Dorsolateral prefrontal cortex (tissue), 120 donors: ENCODE measurements at regions of chr3 and their contacts with region 1.

Region 1: DNA sequence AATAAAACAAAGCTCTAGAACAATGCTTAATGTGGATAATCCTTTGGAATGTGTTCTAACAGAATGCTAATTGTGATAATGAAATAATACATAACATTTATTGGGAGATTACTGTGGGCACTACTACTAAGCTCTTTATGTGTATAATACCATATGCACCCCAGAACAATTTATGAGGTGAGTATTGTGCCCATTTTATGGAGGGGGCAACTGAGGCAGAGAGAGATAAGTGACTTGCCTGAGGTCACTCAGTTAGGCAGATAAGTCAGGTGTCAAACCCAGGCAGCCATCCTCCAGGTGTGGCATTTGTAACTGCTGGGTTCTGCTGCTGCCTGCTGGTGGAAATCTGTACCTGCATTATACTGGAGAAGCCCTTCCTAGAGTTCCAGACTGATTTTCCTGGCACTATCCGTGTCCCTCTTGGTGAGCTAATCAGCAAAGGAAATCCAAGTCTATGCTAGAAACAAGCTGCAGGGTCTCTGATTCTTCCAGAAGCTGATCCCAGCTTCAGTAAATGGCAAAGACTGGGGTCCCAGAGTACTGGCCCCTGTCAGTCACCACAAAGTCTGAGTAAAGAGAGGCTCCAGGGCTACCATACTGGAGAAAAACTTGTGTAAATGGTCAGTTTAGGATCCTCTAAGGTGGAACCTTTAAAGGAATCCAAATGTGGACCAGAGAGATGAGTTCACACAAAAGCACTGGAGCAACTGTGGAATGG is 22.6 kb upstream of the RBP1 start:
- DNase-seq: peak in 1 of 10 donors; percentile 33
- H3K4me3 ChIP-seq: no peak overlapping the region
- H3K27ac ChIP-seq: peak overlapping the region in 36 of 59 donors; percentile 5 to 75 (median 45)
- H3K27me3 ChIP-seq: no peaks in the 10 kb centered on the region
- CTCF ChIP-seq: peak; percentile 24 to 80 (median 65)

Region 2: DNA sequence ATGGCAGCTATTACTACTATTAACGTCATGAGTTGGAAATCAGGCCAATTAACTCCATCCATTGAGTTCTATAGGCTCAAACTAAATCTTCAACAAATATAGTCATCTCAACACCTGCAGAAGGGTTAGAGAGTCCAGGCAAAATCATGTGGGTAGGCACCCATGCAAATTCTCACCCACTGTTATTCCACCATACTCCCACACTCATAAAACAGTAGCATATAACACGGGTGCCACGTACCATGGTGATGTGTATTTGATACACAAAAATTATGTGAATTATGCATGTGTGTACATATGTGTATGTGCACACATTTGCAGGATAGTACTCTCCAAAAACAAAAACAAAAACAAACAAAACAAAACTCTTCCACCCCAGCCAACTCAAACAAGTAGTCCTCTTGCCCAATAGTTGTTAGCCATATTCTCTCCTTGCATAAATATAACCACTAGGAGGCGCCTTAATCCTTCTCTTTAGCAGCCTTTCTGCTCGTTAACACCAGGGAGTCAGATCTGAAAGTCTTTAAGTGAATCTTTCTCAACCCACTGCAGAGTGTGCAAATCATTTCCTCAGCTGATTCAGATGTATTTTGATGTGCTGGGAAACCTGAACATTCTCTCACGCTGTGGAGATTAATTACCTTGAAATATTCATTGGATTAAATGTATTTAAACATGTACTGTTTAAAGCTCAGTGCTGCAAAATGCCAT is 134.7 kb before region 1 on chr3:
- intact Hi-C with region 1: loop called (anchors 1 to 5 kb)
- DNase-seq: no peak
- H3K4me3 ChIP-seq: no peak overlapping the region
- H3K27ac ChIP-seq: no peak overlapping the region
- H3K27me3 ChIP-seq: no peaks in the 10 kb centered on the region
- CTCF ChIP-seq: peak; percentile 59 to 96 (median 89)

Region 3: GRCh38 chr3:139506766-139507165 is 55.4 kb before region 1 on chr3:
- intact Hi-C with region 1: loop called in 1 of 2 experiments (anchors 5 kb)
- DNase-seq: peak in 3 of 10 donors; percentile 12 to 49 (median 39)
- H3K4me3 ChIP-seq: no peak overlapping the region
- H3K27ac ChIP-seq: no peak overlapping the region
- H3K27me3 ChIP-seq: no peaks in the 10 kb centered on the region
- CTCF ChIP-seq: peak in 50 of 56 donors; percentile 24 to 69 (median 42)

Region 4: DNA sequence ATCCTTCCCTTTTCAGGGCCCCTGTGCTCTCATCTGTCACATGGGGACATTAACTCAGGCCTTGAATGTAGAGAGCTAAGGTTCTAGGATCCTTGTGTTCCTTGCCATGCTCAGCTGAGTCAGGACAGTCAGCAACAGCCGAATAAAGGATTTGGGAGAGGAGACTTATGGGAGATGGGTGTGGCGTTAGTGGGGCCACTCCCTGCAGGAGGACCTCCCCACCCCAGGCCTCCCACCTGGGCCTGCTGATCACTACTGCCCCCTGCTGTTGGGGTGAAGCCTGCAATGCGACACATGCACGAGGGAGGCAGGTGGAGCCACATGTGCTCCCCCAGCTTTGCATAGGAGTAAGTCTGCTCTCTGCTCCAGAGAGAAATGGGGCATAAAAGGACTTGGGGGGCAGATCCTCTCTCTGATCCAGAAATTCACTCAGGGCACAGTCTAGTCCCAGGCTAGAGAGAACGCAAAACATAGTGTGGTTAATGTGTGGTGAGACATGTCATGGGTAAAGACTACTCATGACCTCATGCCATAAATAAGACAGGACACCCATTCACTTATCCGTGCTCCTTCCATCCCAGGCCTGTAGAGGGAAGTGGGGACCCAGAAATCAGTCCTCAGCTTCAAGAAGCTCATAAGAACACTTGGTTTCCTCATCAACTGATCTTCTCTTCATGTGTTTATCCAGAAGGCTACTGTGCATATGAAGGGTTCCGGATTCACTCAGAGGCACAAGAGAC is 42.0 kb before region 1 on chr3:
- intact Hi-C with region 1: loop called in 1 of 2 experiments (anchors 5 kb)
- DNase-seq: no peak
- H3K4me3 ChIP-seq: no peak overlapping the region
- H3K27ac ChIP-seq: no peak overlapping the region
- H3K27me3 ChIP-seq: no peaks in the 10 kb centered on the region
- CTCF ChIP-seq: peak in 47 of 56 donors; percentile 5 to 58 (median 32)

Region 5: DNA sequence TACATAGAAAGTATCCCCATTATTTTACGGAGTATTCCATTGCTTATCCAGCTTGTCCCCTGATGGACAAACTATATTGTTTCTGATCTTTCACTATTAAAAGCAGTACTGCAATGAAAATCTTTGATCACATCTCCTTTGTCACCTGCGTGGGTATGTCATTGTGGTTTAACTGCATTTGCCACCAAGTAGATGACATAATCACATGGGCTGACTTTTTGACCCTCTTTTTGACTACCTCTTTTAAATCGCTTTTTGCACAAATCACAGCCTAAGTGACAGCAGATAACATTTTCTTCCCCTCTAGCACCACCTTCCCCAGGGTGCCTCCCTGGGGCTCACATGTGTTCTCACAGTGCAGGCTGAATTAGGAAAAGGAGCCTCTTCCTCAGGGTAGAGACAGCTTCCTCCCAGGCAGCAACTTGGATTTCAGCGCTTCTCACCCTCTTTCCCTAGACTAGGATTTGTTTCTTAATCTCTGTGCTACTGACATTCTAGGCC is 21.4 kb before region 1 on chr3:
- intact Hi-C with region 1: loop called in 1 of 2 experiments (anchors 2 kb)
- DNase-seq: no peak
- H3K4me3 ChIP-seq: peak overlapping the region in 42 of 59 donors; percentile 49 to 84 (median 73)
- H3K27ac ChIP-seq: peak overlapping the region in 48 of 59 donors; percentile 20 to 95 (median 86)
- H3K27me3 ChIP-seq: no peaks in the 10 kb centered on the region
- CTCF ChIP-seq: no peak

Region 6: DNA sequence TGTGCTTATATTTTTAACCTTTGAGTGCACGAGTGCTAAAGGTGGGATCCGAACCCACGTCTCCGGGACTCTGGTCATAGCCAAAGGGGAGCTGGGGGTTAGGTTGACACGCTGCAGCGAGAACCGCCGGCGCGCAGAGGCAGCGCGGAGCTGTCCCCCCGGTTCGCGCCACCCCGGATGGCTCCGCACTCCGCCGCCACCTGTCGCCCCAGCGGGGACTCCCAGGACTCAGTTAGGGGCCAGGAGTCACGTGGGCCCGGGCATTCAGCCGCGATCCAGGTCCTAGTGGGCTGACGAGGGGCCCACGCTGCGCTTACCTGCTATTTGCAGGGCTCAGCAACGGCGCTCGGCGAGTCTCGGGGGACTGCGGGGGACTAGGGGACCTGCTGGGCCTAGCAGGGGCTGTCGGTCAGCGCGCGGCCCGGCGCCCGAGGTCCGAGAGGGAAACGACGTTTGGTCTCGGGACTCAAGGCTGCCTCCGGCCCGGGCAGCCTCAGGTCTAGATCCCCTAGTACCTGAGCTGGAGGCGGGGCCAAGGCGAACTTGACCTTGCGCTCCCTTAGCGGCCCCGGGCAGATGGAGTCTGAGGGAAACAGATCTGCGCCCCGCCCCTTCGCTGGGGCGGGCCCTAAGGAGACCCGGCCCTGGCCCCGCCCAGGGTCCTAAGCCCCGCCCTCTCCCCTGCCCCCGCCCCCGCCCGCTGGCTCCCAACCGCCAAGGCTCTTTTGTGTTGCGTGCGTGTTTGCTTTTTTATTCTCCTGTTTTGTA is 115.5 kb after region 1 on chr3 and contains the start of gene NMNAT3:
- intact Hi-C with region 1: no loop called
- DNase-seq: peak; percentile 65 to 85 (median 76)
- H3K4me3 ChIP-seq: peak within 1 kb of the TSS; percentile 74 to 99 (median 91)
- H3K27ac ChIP-seq: peak within 1 kb of the TSS in 24 of 59 donors; percentile 13 to 84 (median 54)
- H3K27me3 ChIP-seq: no peaks in the 10 kb centered on the region
- CTCF ChIP-seq: peak in 13 of 56 donors; percentile 3 to 33 (median 10)
- total RNA-seq, gene NMNAT3: 8.1 to 27.6 (median 16.2) TPM